MCF 10A (cell line): ENCODE measurements at regions of chr7 and their contacts with region 1.

Region 1: GRCh38 chr7:104231054-104232046 is 23.5 kb upstream of the ORC5 start:
- DNase-seq: peak; percentile 57
- H3K4me3 Mint-ChIP-seq: no peak overlapping the region
- H3K27ac Mint-ChIP-seq: no peak overlapping the region
- H3K4me1 Mint-ChIP-seq: no peaks in the 10 kb centered on the region
- H3K27me3 Mint-ChIP-seq: peaks cover 61% of the 10 kb centered on the region
- CTCF ChIP-seq: peak; percentile 83

Region 2: DNA sequence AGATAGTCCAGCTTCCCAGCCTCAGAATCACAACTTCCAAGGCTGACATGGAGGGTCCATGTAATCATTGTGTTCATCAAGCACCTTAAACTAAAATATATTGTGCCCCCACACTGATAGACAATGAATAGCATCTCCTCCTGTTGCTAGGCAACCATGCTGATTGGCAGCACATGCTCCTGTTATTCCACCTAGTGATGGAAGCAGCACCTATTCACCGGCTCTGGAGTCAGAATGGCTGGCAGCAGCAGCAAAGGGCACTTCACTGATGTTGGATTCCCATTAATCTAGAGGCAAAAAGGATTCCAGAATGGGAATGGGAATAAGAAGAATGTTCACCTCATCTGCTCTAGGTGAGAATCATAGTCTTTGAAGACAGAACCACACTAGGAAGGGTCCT is 296.8 kb before region 1 on chr7:
- CTCF ChIA-PET with region 1: no interaction called
- POLR2A ChIA-PET with region 1: no interaction called
- intact Hi-C with region 1: no loop called
- DNase-seq: no peak
- H3K4me3 Mint-ChIP-seq: no peak overlapping the region
- H3K27ac Mint-ChIP-seq: no peak overlapping the region
- H3K4me1 Mint-ChIP-seq: no peaks in the 10 kb centered on the region
- H3K27me3 Mint-ChIP-seq: peaks cover 58% of the 10 kb centered on the region
- CTCF ChIP-seq: no peak

Region 3: DNA sequence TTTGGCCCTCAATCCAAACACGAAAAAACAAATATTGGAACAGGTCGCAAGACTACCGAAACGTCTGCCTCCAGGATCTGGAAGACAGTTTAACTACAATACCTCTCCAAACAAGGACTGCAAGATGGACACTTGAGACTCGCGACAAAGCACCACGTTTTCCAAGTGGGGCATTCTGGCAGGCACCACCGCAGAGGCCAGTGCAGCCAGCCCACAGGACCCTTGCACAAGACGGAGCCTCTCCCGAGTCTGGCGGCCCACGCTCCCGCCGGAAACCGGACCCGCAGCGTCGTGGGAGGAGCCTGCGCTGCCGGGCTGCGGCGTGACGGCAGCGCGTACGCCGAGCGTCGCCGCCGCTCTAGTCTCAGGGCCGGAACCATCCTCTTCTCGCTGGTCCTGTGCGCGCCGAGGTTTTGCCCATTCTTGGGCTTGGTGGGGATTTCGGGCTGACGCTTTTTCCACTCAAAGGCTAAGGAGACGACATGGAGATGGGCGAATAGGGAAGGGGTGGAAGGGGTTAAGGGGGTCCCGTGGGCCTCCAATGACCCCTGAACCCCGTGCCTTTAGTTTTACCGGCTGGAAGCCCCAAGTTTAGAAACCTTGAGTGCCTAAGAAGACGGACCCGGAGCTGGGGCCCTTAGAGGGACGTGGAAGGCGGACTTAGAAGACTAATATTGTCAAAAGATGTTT is 23.5 kb before region 1 on chr7 and contains the start of gene ORC5:
- CTCF ChIA-PET with region 1: interaction called, 16 read pairs
- POLR2A ChIA-PET with region 1: interaction called, 4 read pairs
- intact Hi-C with region 1: no loop called
- DNase-seq: peak; percentile 82
- H3K4me3 Mint-ChIP-seq: peak within 1 kb of the TSS; percentile 88
- H3K27ac Mint-ChIP-seq: peak within 1 kb of the TSS; percentile 78
- H3K4me1 Mint-ChIP-seq: peaks cover 24% of the 10 kb centered on the region
- H3K27me3 Mint-ChIP-seq: peaks cover 8% of the 10 kb centered on the region
- CTCF ChIP-seq: no peak
- total RNA-seq, gene ORC5: 25.4 and 34.1 TPM in 2 replicates

Region 4: GRCh38 chr7:104267701-104268368 is 36.5 kb after region 1 on chr7:
- CTCF ChIA-PET with region 1: interaction called, 66 read pairs
- POLR2A ChIA-PET with region 1: interaction called, 5 read pairs
- intact Hi-C with region 1: loop called (anchors 1 kb)
- DNase-seq: peak; percentile 27
- H3K4me3 Mint-ChIP-seq: no peak overlapping the region
- H3K27ac Mint-ChIP-seq: no peak overlapping the region
- H3K4me1 Mint-ChIP-seq: no peaks in the 10 kb centered on the region
- H3K27me3 Mint-ChIP-seq: peaks cover 31% of the 10 kb centered on the region
- CTCF ChIP-seq: peak; percentile 34

Region 5: GRCh38 chr7:104848138-104848990 is 617.0 kb after region 1 on chr7:
- CTCF ChIA-PET with region 1: interaction called, 98 read pairs
- POLR2A ChIA-PET with region 1: no interaction called
- intact Hi-C with region 1: loop called (anchors 1 kb)
- DNase-seq: peak; percentile 72
- H3K4me3 Mint-ChIP-seq: no peak overlapping the region
- H3K27ac Mint-ChIP-seq: no peak overlapping the region
- H3K4me1 Mint-ChIP-seq: no peaks in the 10 kb centered on the region
- H3K27me3 Mint-ChIP-seq: peaks cover 52% of the 10 kb centered on the region
- CTCF ChIP-seq: peak; percentile 93

Region 6: GRCh38 chr7:104862719-104863118 is 631.4 kb after region 1 on chr7:
- CTCF ChIA-PET with region 1: interaction called, 19 read pairs
- POLR2A ChIA-PET with region 1: no interaction called
- intact Hi-C with region 1: no loop called
- DNase-seq: peak; percentile 44
- H3K4me3 Mint-ChIP-seq: no peak overlapping the region
- H3K27ac Mint-ChIP-seq: no peak overlapping the region
- H3K4me1 Mint-ChIP-seq: no peaks in the 10 kb centered on the region
- H3K27me3 Mint-ChIP-seq: peaks cover 90% of the 10 kb centered on the region
- CTCF ChIP-seq: peak; percentile 16

Region 7: GRCh38 chr7:104900525-104901239 is 669.3 kb after region 1 on chr7:
- CTCF ChIA-PET with region 1: interaction called, 10 read pairs
- POLR2A ChIA-PET with region 1: no interaction called
- intact Hi-C with region 1: no loop called
- DNase-seq: no peak
- H3K4me3 Mint-ChIP-seq: no peak overlapping the region
- H3K27ac Mint-ChIP-seq: no peak overlapping the region
- H3K4me1 Mint-ChIP-seq: no peaks in the 10 kb centered on the region
- H3K27me3 Mint-ChIP-seq: peaks cover 2% of the 10 kb centered on the region
- CTCF ChIP-seq: no peak